ENCODE measurements at regions of chr13 and their contacts with region 1.

Region 1: DNA sequence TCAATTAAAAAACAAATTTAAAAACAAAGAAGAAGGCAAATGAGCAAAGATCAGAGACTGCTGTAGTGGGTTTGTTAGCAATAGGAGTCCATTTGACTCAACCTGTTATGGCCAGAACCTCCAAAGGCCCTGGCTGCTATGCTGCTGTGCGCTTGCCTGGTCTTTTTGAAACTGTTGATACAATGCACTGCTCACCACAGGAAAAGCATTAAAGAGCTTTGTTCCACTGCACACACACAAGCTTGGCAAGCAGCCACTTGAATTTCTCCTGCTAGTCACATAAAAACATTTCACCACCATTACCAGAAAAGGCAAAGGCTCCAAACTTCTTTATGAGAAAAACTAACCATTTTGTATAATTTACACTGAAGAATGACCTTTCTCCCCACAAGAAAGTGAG is 132.2 kb downstream of the FREM2 start:
- DNase-seq: no peak
- ATAC-seq: no peak
- H3K4me3 ChIP-seq: no peak overlapping the region
- H3K27ac ChIP-seq: no peak overlapping the region
- H3K4me1 ChIP-seq: no peaks in the 10 kb centered on the region
- H3K27me3 ChIP-seq: no peaks in the 10 kb centered on the region
- CTCF ChIP-seq: no peak
- POLR2A ChIP-seq: no peak

Region 2: GRCh38 chr13:38730332-38730731 is 88.7 kb before region 1 on chr13:
- in situ Hi-C with region 1: no loop called
- intact Hi-C with region 1: no loop called
- DNase-seq: no peak
- ATAC-seq: no peak
- H3K4me3 ChIP-seq: no peak overlapping the region
- H3K27ac ChIP-seq: no peak overlapping the region
- H3K4me1 ChIP-seq: peaks cover 0 to 7% of the 10 kb centered on the region in 2 donors
- H3K27me3 ChIP-seq: no peaks in the 10 kb centered on the region
- CTCF ChIP-seq: no peak
- POLR2A ChIP-seq: no peak

Region 3: GRCh38 chr13:38755793-38756192 is 63.3 kb before region 1 on chr13:
- in situ Hi-C with region 1: loop called in 1 of 4 experiments (anchors 10 kb)
- intact Hi-C with region 1: no loop called
- DNase-seq: no peak
- ATAC-seq: no peak
- H3K4me3 ChIP-seq: no peak overlapping the region
- H3K27ac ChIP-seq: no peak overlapping the region
- H3K4me1 ChIP-seq: peaks cover 8 to 12% of the 10 kb centered on the region in 2 donors
- H3K27me3 ChIP-seq: no peaks in the 10 kb centered on the region
- CTCF ChIP-seq: no peak
- POLR2A ChIP-seq: no peak